Naive thymus-derived CD8-positive, alpha-beta T cell (primary cell): ENCODE measurements at regions of chr10 and their contacts with region 1.

Region 1: DNA sequence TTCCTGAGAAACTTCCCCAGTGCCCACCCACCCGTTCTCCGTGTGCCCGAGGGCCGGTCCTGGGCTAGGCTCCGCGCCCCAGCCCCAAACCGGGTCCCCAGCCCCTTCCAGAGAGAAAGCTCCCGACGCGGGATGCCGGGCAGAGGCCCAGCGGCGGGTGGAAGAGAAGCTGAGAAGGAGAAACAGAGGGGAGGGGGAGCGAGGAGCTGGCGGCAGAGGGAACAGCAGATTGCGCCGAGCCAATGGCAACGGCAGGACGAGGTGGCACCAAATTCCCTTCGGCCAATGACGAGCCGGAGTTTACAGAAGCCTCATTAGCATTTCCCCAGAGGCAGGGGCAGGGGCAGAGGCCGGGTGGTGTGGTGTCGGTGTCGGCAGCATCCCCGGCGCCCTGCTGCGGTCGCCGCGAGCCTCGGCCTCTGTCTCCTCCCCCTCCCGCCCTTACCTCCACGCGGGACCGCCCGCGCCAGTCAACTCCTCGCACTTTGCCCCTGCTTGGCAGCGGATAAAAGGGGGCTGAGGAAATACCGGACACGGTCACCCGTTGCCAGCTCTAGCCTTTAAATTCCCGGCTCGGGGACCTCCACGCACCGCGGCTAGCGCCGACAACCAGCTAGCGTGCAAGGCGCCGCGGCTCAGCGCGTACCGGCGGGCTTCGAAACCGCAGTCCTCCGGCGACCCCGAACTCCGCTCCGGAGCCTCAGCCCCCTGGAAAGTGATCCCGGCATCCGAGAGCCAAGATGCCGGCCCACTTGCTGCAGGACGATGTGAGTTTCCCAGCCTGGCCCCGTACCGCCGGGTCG is at the start of gene SCD:
- DNase-seq: peak; percentile 53 to 79 (median 64)
- ATAC-seq: peak; percentile 81 to 88
- H3K4me3 Mint-ChIP-seq: peak within 1 kb of the TSS; percentile 82 to 93 (median 92)
- H3K27ac Mint-ChIP-seq: peak within 1 kb of the TSS; percentile 17 to 88 (median 69)
- H3K4me1 Mint-ChIP-seq: peaks cover 29 to 48% (median 34%) of the 10 kb centered on the region in 4 donors
- H3K27me3 Mint-ChIP-seq: no peaks in the 10 kb centered on the region
- polyA plus RNA-seq, gene SCD: 2.8 to 5.5 (median 4.4) TPM

Region 2: GRCh38 chr10:100185364-100186252 is 161.4 kb before region 1 on chr10 and contains the start of gene ERLIN1:
- POLR2A ChIA-PET with region 1: no interaction called
- DNase-seq: peak; percentile 86 to 96 (median 90)
- ATAC-seq: peak; percentile 90 to 91
- H3K4me3 Mint-ChIP-seq: peak within 1 kb of the TSS; percentile 92 to 100 (median 98)
- H3K27ac Mint-ChIP-seq: peak within 1 kb of the TSS; percentile 92 to 99 (median 96)
- H3K4me1 Mint-ChIP-seq: peaks cover 21 to 64% (median 60%) of the 10 kb centered on the region in 4 donors
- H3K27me3 Mint-ChIP-seq: no peaks in the 10 kb centered on the region
- polyA plus RNA-seq, gene ERLIN1: 5.4 to 13.0 (median 8.3) TPM

Region 3: GRCh38 chr10:100373298-100374136 is 26.6 kb after region 1 on chr10:
- POLR2A ChIA-PET with region 1: interaction called, 13 read pairs
- DNase-seq: peak; percentile 65 to 91 (median 81)
- ATAC-seq: peak; percentile 82 to 88
- H3K4me3 Mint-ChIP-seq: no peak overlapping the region
- H3K27ac Mint-ChIP-seq: no peak overlapping the region
- H3K4me1 Mint-ChIP-seq: peaks cover 17 to 41% (median 39%) of the 10 kb centered on the region in 4 donors
- H3K27me3 Mint-ChIP-seq: no peaks in the 10 kb centered on the region